ENCODE measurements at regions of chr18 and their contacts with region 1.

Region 1: DNA sequence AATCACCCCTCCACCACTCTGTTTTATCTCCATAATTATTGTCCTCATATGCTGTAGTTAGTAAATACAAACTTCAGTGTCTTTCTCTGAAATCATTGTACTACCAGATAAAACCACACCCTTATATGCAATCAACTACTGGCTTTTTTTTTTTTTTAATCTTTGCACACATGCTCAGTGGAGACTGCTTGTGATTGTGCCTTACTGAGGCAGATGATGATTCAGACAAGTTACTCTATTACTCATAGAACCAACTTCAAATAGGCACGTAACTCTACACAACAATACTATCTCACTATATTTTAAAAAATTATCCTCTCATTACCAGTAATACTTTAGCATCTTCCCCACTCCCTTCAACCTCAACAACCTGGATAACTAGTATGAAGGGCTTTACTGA is 1278.4 kb upstream of the PIK3C3 start:
- DNase-seq: no peak
- ATAC-seq: no peak
- H3K4me3 ChIP-seq: no peak overlapping the region
- H3K27ac ChIP-seq: no peak overlapping the region
- H3K4me1 ChIP-seq: no peaks in the 10 kb centered on the region
- H3K27me3 ChIP-seq: no peaks in the 10 kb centered on the region
- CTCF ChIP-seq: no peak
- POLR2A ChIP-seq: no peak
- RAD21 ChIP-seq: no peak

Region 2: GRCh38 chr18:40355726-40356125 is 320.9 kb before region 1 on chr18:
- CTCF ChIA-PET with region 1: no interaction called
- POLR2A ChIA-PET with region 1: no interaction called
- RAD21 ChIA-PET with region 1: no interaction called
- intact Hi-C with region 1: no loop called
- DNase-seq: no peak
- ATAC-seq: no peak
- H3K4me3 ChIP-seq: no peak overlapping the region
- H3K27ac ChIP-seq: no peak overlapping the region
- H3K4me1 ChIP-seq: no peaks in the 10 kb centered on the region
- H3K27me3 ChIP-seq: no peaks in the 10 kb centered on the region; the same call in 1 of the 2 replicates
- CTCF ChIP-seq: no peak
- POLR2A ChIP-seq: no peak
- RAD21 ChIP-seq: no peak

Region 3: GRCh38 chr18:40687399-40687798 is 10.7 kb after region 1 on chr18:
- CTCF ChIA-PET with region 1: no interaction called
- POLR2A ChIA-PET with region 1: no interaction called
- RAD21 ChIA-PET with region 1: no interaction called
- intact Hi-C with region 1: loop called (anchors 1 kb)
- DNase-seq: no peak
- ATAC-seq: no peak
- H3K4me3 ChIP-seq: no peak overlapping the region
- H3K27ac ChIP-seq: no peak overlapping the region
- H3K4me1 ChIP-seq: no peaks in the 10 kb centered on the region
- H3K27me3 ChIP-seq: no peaks in the 10 kb centered on the region
- CTCF ChIP-seq: no peak
- POLR2A ChIP-seq: no peak
- RAD21 ChIP-seq: no peak